ENCODE measurements at regions of chr5 and their contacts with region 1.

Region 1: GRCh38 chr5:151058891-151059489 is 21.8 kb downstream of the TNIP1 start:
- DNase-seq: no peak
- H3K4me3 ChIP-seq: no peak overlapping the region
- H3K27ac ChIP-seq: no peak overlapping the region
- H3K4me1 ChIP-seq: peaks cover 11% of the 10 kb centered on the region
- H3K27me3 ChIP-seq: no peaks in the 10 kb centered on the region
- CTCF ChIP-seq: peak in 1 of 2 donors; percentile 3

Region 2: GRCh38 chr5:150989695-150990094 is 69.3 kb before region 1 on chr5:
- CTCF ChIA-PET with region 1: no interaction called
- dilution Hi-C with region 1: loop called (anchors 5 kb)
- in situ Hi-C with region 1: no loop called
- intact Hi-C with region 1: no loop called
- DNase-seq: no peak
- H3K4me3 ChIP-seq: no peak overlapping the region
- H3K27ac ChIP-seq: no peak overlapping the region
- H3K4me1 ChIP-seq: no peaks in the 10 kb centered on the region
- H3K27me3 ChIP-seq: no peaks in the 10 kb centered on the region
- CTCF ChIP-seq: peak; percentile 17 to 20

Region 3: DNA sequence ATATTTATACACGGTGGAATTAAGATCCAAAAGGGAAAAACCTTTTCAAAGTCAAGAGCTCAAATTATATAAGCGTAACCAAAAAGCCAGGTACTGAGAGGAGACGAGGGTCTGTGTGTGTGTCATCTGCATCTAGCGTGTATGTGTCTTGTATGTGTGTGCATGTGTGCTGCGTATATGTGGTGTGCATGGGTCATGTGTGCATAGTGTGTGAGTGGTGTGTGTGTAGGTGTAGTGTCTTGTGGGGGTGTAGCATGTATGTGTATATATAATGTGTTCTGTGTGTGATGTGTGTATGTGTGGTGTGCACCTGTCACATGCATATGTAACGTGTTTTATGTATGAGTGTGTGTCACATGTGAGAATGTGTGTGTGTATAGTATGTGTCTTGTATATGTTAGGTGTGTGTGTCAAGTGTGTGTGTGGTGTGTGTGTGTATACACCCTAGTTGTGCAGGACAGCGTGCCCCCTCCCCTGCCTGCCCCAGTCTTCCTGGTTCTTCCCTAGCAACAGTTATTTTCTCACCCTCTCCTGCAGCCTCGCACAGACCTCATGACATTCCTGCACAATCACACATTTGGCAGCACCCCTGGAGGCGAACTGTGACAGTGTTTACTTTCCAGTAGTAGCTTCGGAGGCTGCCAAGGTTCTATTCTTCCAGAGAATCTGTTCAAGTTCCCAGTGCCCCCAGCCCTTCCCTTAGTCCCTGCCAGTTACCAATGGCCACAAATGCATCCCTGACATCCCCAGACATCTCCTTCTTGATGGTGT is 48.9 kb after region 1 on chr5:
- CTCF ChIA-PET with region 1: no interaction called
- dilution Hi-C with region 1: loop called (anchors 5 kb)
- in situ Hi-C with region 1: no loop called
- intact Hi-C with region 1: no loop called
- DNase-seq: no peak
- H3K4me3 ChIP-seq: no peak overlapping the region
- H3K27ac ChIP-seq: no peak overlapping the region
- H3K4me1 ChIP-seq: no peaks in the 10 kb centered on the region
- H3K27me3 ChIP-seq: no peaks in the 10 kb centered on the region
- CTCF ChIP-seq: peak in 1 of 2 donors; percentile 4

Measured in mammary epithelial cell (primary cell).